ENCODE measurements at regions of chr5 and their contacts with region 1.

Region 1: GRCh38 chr5:179623003-179623880 is at the start of gene HNRNPH1:
- DNase-seq: peak; percentile 97 to 99
- ATAC-seq: peak; percentile 88 to 89 (median 88)
- H3K4me3 ChIP-seq: peak within 1 kb of the TSS; percentile 79
- H3K27ac ChIP-seq: peak within 1 kb of the TSS; percentile 93
- H3K4me1 ChIP-seq: peaks cover 46% of the 10 kb centered on the region
- H3K27me3 ChIP-seq: no peaks in the 10 kb centered on the region
- CTCF ChIP-seq: peak; percentile 12
- total RNA-seq, gene HNRNPH1: 141 to 195 (median 179) TPM

Region 2: DNA sequence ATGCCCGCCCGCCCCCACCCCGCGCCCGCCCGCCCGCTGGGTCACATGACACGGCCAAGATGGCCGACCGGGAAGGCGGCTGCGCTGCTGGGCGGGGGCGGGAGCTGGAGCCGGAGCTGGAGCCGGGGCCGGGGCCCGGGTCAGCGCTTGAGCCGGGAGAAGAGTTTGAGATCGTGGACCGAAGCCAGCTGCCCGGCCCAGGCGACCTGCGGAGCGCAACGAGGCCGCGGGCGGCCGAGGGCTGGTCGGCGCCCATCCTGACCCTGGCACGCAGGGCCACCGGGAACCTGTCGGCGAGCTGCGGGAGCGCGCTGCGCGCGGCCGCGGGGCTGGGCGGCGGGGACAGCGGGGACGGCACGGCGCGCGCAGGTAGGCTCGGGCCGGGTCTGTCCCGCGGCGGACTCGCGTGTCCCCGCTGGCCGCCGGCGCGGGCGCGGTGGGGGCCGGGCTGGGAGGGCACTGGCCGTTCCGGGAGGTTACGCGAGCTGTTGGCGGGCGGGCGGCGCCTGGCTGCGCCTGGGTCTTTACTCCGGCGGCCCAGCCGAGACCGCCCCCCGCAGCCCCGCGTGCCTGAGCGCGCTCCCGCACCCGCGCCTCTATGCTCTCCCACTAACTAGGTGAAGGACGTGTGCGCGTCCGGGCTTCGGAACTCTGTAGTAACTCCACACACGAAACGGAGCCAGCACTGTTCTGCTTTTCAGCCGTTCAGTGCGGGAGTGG is 72.6 kb before region 1 on chr5 and contains the start of gene RUFY1:
- intact Hi-C with region 1: loop called in 1 of 2 experiments (anchors 5 kb)
- DNase-seq: peak; percentile 86 to 92
- ATAC-seq: peak; percentile 89 to 95 (median 92)
- H3K4me3 ChIP-seq: peak within 1 kb of the TSS; percentile 97
- H3K27ac ChIP-seq: peak within 1 kb of the TSS; percentile 98
- H3K4me1 ChIP-seq: peaks cover 24% of the 10 kb centered on the region
- H3K27me3 ChIP-seq: no peaks in the 10 kb centered on the region
- CTCF ChIP-seq: no peak
- total RNA-seq, gene RUFY1: 17.9 to 26.3 (median 23.2) TPM

Region 3: GRCh38 chr5:179610109-179610902 is 12.9 kb before region 1 on chr5:
- intact Hi-C with region 1: loop called in 1 of 2 experiments (anchors 1 kb)
- DNase-seq: peak; percentile 51 to 84
- ATAC-seq: peak; percentile 46 to 76 (median 70)
- H3K4me3 ChIP-seq: peak overlapping the region; percentile 1
- H3K27ac ChIP-seq: peak overlapping the region; percentile 53
- H3K4me1 ChIP-seq: peaks cover 46% of the 10 kb centered on the region
- H3K27me3 ChIP-seq: no peaks in the 10 kb centered on the region
- CTCF ChIP-seq: no peak